ENCODE measurements at regions of chr12 and their contacts with region 1.

Region 1: GRCh38 chr12:110600254-110600653 is 13.7 kb upstream of the TCTN1 start:
- DNase-seq: no peak

Region 2: DNA sequence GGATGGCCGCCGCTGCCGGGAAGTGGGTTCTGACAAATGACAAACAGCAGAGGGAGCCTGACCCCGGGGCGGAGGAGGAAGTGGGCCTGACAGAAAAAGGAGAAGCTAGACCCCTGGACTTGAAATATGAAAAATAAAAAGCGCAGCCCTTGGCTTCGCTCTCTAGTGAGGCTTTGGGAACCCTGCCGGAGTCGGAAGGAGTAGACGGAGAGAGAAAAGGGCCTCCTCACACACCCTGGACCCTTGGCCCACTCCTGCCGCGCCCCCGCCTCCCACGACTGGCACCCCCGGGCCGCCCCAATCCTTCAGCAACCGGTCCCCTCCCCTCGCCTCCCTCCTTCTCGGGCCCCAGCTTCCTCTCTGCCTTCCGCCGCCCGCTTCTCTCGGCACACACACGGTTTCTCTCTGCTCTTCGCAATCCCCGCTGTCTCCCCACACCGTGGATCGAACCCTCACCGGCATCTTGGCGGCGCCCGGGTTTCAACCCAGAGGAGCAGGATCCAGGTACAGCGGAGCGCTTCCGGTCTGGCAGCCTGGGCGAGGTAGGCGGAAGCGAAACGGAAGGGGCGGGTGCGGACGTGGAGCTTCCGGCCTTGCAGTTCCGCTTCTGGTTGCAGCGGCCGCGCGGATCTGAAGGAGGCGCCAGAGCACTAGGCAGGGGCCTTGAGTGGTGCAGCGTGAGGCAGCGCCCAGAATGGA is 150.3 kb before region 1 on chr12 and contains the start of gene ARPC3:
- intact Hi-C with region 1: loop called (anchors 2 kb)
- DNase-seq: peak; percentile 89 to 99 (median 94)

Region 3: DNA sequence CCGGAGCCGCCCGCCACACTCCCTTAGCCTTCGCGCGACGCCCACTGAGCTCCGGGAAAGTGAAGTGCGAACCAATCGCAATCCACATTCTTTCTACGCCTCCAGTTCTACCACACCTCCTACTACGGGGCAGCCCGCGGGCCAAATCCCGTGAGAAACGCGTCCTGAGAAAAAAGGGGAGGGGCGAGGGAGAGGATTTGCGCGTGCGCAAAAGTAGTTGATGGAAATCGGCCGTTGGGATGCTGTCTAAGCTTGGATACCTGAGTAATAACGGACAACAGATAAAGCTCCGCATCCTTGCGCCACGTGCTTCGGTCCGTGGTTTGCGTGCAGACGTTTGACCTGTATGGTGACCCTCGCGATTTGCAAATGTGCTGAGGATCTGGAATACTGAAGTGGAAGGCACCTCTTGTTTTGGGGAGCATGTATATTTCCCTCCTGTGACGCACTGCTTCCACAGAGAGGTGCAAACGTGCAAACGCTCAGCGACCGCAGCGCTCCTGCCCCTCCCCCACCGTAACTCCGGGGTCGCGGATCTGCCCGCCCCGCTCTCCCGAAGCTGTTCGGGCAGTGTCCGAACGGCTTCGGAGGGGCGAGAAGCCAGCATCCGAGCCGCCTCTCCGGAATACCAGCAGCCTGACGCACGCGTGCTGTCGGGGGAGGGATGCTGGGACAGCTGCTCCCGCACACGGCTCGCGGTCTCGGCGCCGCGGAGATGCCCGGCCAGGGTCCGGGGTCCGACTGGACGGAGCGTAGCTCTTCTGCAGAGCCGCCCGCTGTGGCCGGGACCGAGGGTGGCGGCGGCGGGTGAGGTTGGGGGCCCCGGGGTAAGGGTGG is 131.8 kb before region 1 on chr12 and contains the starts of genes FAM216A and GPN3:
- intact Hi-C with region 1: loop called (anchors 5 kb)
- DNase-seq: peak; percentile 92 to 99 (median 95)

Region 4: DNA sequence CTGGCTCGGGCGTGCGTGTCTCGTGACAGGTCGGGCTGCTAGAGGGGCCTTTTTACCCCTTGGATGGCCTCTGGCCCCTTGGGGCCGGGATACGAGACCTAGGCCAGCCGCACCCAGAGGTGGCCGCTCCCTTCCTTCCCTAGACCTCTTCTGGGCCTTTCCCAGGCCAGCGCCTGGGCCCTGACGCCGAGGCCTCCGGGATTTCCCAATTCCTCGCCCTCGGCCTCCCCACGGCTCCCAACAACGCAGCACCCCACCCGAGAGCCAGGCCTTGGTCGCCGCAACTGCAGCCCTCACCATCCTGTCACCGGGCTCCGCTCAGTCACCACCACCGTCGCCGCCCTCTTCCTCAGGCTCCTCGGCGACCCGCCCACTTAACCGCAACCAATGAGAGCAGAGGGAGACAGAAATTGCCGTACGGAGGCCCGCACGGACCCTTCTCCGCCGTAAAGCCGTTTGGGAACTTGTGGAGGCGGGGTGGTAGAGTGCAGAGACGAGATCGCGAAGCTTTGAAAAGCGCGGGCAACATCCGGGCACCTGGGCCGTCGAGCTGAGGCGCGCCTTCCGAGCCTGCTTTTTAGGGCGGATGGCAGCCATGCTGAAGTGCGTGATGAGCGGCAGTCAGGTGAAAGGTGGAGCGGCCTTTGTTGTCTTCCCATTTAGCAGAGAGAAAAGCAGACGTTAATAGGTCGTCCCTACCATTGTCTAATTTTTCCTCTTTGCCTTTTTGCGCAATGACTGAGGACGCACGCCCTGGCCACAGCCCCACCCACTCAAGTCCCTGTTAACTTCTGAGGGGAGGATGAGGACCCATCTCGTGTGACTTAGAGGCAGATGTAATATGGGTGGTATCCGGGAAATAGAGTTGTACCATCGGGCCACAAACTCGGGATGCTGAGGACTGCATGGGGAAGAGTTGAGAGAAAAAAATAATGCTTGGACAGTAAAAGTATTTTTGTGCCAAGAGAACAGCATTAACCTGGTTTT is 98.2 kb before region 1 on chr12 and contains the starts of genes RAD9B and VPS29:
- intact Hi-C with region 1: loop called (anchors 5 kb)
- DNase-seq: peak; percentile 95 to 99 (median 97)

Region 5: DNA sequence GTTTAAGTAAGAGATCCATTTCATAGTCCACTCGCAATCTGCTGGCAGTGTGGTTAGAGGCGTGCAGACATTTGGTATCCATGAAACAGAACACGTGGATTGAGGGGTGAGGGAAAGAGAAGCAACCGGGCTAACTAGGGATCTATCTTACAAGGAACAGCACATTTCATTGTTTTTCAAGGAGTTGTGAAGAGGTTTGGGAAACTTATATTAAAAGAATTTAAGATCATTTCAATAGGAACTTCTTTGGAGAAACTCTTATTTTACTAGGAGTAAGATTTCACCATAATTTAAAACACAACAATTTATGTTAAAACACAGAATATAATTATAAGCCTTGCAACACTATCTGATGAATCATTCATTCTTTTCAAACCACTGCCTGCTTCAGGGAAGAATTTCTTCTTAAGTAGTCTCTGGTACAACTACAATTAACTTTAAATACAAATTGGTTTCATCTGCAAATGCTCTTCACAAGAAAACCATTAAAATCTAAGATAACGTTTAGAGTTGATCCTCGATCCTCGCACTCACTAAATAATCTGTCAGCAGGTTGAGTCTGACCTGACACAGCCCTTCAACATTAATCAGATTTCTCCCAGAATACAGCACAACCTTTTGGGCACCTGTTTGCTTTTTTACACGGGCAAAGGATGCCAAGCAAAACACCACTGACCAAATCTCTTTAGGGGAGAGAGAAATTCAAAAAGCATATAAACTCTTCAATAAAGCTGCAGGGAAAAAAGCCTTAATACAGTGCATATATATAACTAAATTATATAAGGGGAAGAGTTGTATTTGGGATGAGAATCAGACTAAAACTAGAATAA is 44.5 kb before region 1 on chr12:
- intact Hi-C with region 1: loop called (anchors 1 kb)
- DNase-seq: no peak